GM12878 (cell line): ENCODE measurements at regions of chr11 and their contacts with region 1.

Region 1: GRCh38 chr11:109527496-109527895 is 105.5 kb downstream of the C11orf87 start:
- DNase-seq: no peak
- ATAC-seq: no peak
- H3K4me3 ChIP-seq: no peak overlapping the region
- H3K27ac ChIP-seq: no peak overlapping the region
- H3K4me1 ChIP-seq: no peaks in the 10 kb centered on the region
- H3K27me3 ChIP-seq: no peaks in the 10 kb centered on the region
- CTCF ChIP-seq: no peak
- EP300 ChIP-seq: no peak
- POLR2A ChIP-seq: no peak
- RAD21 ChIP-seq: no peak

Region 2: DNA sequence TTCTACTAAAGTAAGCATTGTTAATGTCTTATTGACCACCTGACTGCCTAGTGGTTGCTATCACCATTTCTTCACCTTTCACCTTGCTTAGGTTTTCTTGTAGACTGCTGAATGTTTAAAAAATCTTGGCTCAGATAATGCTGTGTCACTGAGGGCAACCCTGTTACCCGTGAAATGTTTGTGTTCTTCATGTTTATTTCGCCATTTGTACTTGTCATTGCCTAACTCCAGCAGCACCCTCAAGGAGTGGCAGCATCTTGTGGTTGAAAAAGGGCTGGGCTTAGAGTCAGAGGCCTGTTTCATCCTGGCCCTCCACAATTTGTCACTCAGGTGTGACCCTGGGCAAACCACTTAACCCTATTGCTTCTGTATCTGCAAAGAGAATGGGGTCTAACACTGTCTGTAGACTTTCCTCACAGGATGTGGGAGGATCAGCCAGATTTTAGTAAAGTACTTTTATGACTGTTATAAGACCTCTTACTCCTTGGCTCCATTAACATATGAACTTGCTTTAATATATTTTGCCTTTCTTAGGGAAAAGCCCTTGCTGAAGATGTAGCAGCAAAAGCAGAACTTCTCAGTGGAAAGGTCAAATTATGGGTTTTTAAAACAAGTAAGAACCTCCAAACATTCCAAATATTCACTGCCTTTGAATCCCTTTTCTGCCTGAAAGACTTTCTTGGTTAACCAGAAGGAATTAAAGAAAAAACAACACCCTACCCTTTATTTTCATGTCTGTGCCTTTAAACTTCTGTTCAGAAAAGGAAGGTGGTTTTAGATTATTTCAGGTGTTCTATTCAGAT is 260.0 kb before region 1 on chr11:
- CTCF ChIA-PET with region 1: no interaction called
- POLR2A ChIA-PET with region 1: no interaction called
- RAD21 ChIA-PET with region 1: no interaction called
- SMC1A ChIA-PET with region 1: no interaction called
- in situ Hi-C with region 1: no loop called
- intact Hi-C with region 1: no loop called
- DNase-seq: no peak
- ATAC-seq: no peak
- H3K4me3 ChIP-seq: no peak overlapping the region
- H3K27ac ChIP-seq: no peak overlapping the region
- H3K4me1 ChIP-seq: no peaks in the 10 kb centered on the region
- H3K27me3 ChIP-seq: no peaks in the 10 kb centered on the region
- CTCF ChIP-seq: no peak
- EP300 ChIP-seq: no peak
- POLR2A ChIP-seq: no peak
- RAD21 ChIP-seq: no peak

Region 3: GRCh38 chr11:109480251-109480650 is 47.2 kb before region 1 on chr11:
- CTCF ChIA-PET with region 1: no interaction called
- POLR2A ChIA-PET with region 1: no interaction called
- RAD21 ChIA-PET with region 1: no interaction called
- SMC1A ChIA-PET with region 1: no interaction called
- in situ Hi-C with region 1: loop called (anchors 5 kb)
- intact Hi-C with region 1: no loop called
- DNase-seq: no peak
- ATAC-seq: no peak
- H3K4me3 ChIP-seq: no peak overlapping the region
- H3K27ac ChIP-seq: no peak overlapping the region
- H3K4me1 ChIP-seq: no peaks in the 10 kb centered on the region
- H3K27me3 ChIP-seq: no peaks in the 10 kb centered on the region
- CTCF ChIP-seq: no peak
- EP300 ChIP-seq: no peak
- POLR2A ChIP-seq: no peak
- RAD21 ChIP-seq: no peak

Region 4: GRCh38 chr11:109547356-109548027 is 20.0 kb after region 1 on chr11:
- CTCF ChIA-PET with region 1: no interaction called
- POLR2A ChIA-PET with region 1: no interaction called
- RAD21 ChIA-PET with region 1: no interaction called
- SMC1A ChIA-PET with region 1: no interaction called
- in situ Hi-C with region 1: no loop called
- intact Hi-C with region 1: no loop called
- DNase-seq: no peak
- ATAC-seq: no peak
- H3K4me3 ChIP-seq: no peak overlapping the region
- H3K27ac ChIP-seq: no peak overlapping the region
- H3K4me1 ChIP-seq: no peaks in the 10 kb centered on the region
- H3K27me3 ChIP-seq: no peaks in the 10 kb centered on the region
- CTCF ChIP-seq: no peak
- EP300 ChIP-seq: no peak
- POLR2A ChIP-seq: no peak
- RAD21 ChIP-seq: no peak

Region 5: DNA sequence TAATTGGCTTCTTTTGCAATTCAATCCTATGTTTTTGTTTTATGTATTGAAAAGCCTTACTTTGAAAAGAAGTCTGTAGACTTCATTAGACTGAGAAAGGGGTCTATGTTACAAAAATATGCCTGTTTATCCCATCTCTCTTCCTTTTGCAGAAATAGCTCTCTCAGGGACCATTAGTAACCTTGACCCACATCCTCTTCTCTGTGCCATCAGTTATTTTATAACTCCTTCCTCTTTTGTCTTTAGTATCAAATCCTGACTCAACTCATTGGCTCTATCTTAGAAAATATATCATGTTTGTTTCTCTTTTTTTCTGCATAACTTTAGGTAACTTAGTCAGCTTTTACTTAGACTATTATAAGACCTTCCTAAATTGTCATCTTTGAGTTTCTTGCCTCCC is 586.0 kb after region 1 on chr11:
- CTCF ChIA-PET with region 1: no interaction called
- POLR2A ChIA-PET with region 1: no interaction called
- RAD21 ChIA-PET with region 1: no interaction called
- SMC1A ChIA-PET with region 1: no interaction called
- in situ Hi-C with region 1: no loop called
- intact Hi-C with region 1: no loop called
- DNase-seq: no peak
- ATAC-seq: peak; percentile 60
- H3K4me3 ChIP-seq: no peak overlapping the region
- H3K27ac ChIP-seq: no peak overlapping the region
- H3K4me1 ChIP-seq: no peaks in the 10 kb centered on the region
- H3K27me3 ChIP-seq: no peaks in the 10 kb centered on the region
- CTCF ChIP-seq: no peak
- EP300 ChIP-seq: no peak
- POLR2A ChIP-seq: no peak
- RAD21 ChIP-seq: no peak